Colonic mucosa (tissue), 4 donors: ENCODE measurements at regions of chr19 and their contacts with region 1.

Region 1: DNA sequence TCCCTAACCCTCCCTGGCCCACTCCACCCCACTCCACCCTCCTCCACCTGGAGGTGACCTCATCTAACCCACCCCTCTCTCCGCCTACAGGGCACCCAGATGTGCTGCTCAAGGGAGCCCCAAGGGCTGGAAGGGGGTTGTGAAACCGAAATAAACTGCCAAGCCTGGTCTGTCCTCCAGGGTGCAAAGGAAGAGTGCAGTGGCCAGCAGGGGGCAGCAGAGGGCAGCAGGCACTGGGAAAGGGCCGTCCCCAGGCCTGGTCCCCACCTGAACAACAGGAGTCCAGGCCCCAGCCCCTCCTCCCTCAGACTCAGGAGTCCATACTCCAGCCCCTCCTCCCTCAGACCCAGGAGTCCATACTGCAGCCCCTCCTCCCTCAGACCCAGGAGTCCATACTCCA is 8.4 kb upstream of the BCAM start:
- DNase-seq: peak; percentile 85
- H3K4me3 ChIP-seq: no peak overlapping the region
- H3K27ac ChIP-seq: no peak overlapping the region
- H3K4me1 ChIP-seq: no peaks in the 10 kb centered on the region
- H3K27me3 ChIP-seq: no peaks in the 10 kb centered on the region
- CTCF ChIP-seq: peak; percentile 90

Region 2: GRCh38 chr19:44626048-44626624 is 174.3 kb before region 1 on chr19:
- intact Hi-C with region 1: no loop called
- DNase-seq: no peak
- H3K4me3 ChIP-seq: no peak overlapping the region
- H3K27ac ChIP-seq: no peak overlapping the region
- H3K4me1 ChIP-seq: no peaks in the 10 kb centered on the region
- H3K27me3 ChIP-seq: no peaks in the 10 kb centered on the region
- CTCF ChIP-seq: no peak

Region 3: GRCh38 chr19:44845612-44846454 is 45.4 kb after region 1 on chr19 and contains the start of gene NECTIN2:
- intact Hi-C with region 1: loop called (anchors 2 kb)
- DNase-seq: peak; percentile 100
- H3K4me3 ChIP-seq: peak within 1 kb of the TSS; percentile 85
- H3K27ac ChIP-seq: peak within 1 kb of the TSS; percentile 91
- H3K4me1 ChIP-seq: peaks cover 5% of the 10 kb centered on the region
- H3K27me3 ChIP-seq: no peaks in the 10 kb centered on the region
- CTCF ChIP-seq: peak; percentile 39
- total RNA-seq, gene NECTIN2: 115 to 121 TPM

Region 4: GRCh38 chr19:44972802-44973201 is 172.3 kb after region 1 on chr19:
- intact Hi-C with region 1: no loop called
- DNase-seq: no peak
- H3K4me3 ChIP-seq: no peak overlapping the region
- H3K27ac ChIP-seq: no peak overlapping the region
- H3K4me1 ChIP-seq: no peaks in the 10 kb centered on the region
- H3K27me3 ChIP-seq: no peaks in the 10 kb centered on the region
- CTCF ChIP-seq: no peak